ENCODE measurements at regions of chr4 and their contacts with region 1.

Region 1: DNA sequence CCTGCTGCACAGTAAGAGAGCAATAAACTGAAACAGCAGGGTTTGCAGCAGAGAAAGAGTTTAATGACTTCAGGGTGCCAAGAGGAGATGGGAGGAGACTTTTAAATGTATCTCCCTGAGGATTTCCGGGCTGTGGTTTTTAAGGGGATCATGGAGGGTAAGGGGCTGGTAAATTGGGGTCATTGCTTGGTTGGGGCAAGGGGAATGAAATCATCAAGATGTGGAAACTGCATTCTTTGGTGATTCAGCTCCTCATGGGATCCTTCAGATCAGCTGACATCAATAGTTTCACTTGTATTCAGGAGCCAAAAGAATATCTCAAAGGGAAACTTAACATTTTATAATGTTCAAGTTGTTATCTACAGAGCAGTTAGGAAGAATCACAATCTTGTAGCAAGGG is 174.3 kb upstream of the ANXA10 start:
- DNase-seq: no peak
- ATAC-seq: no peak
- H3K4me3 ChIP-seq: no peak overlapping the region
- H3K27ac ChIP-seq: no peak overlapping the region
- H3K4me1 ChIP-seq: no peaks in the 10 kb centered on the region
- H3K27me3 ChIP-seq: no peaks in the 10 kb centered on the region
- CTCF ChIP-seq: no peak
- POLR2A ChIP-seq: no peak
- RAD21 ChIP-seq: no peak

Region 2: GRCh38 chr4:166078955-166079354 is 1839.1 kb before region 1 on chr4:
- CTCF ChIA-PET with region 1: no interaction called
- POLR2A ChIA-PET with region 1: no interaction called
- dilution Hi-C with region 1: no loop called
- in situ Hi-C with region 1: no loop called
- intact Hi-C with region 1: loop called (anchors 5 kb)
- DNase-seq: no peak
- ATAC-seq: no peak
- H3K4me3 ChIP-seq: no peak overlapping the region
- H3K27ac ChIP-seq: no peak overlapping the region
- H3K4me1 ChIP-seq: no peaks in the 10 kb centered on the region
- H3K27me3 ChIP-seq: no peaks in the 10 kb centered on the region
- CTCF ChIP-seq: no peak
- POLR2A ChIP-seq: no peak
- RAD21 ChIP-seq: no peak

Region 3: GRCh38 chr4:168051526-168051925 is 133.4 kb after region 1 on chr4:
- CTCF ChIA-PET with region 1: no interaction called
- POLR2A ChIA-PET with region 1: no interaction called
- dilution Hi-C with region 1: no loop called
- in situ Hi-C with region 1: no loop called
- intact Hi-C with region 1: no loop called
- DNase-seq: no peak
- ATAC-seq: no peak
- H3K4me3 ChIP-seq: no peak overlapping the region
- H3K27ac ChIP-seq: no peak overlapping the region
- H3K4me1 ChIP-seq: no peaks in the 10 kb centered on the region
- H3K27me3 ChIP-seq: no peaks in the 10 kb centered on the region
- CTCF ChIP-seq: no peak
- POLR2A ChIP-seq: no peak
- RAD21 ChIP-seq: no peak

Measured in IMR-90 (cell line).